ENCODE measurements at regions of chr1 and their contacts with region 1.

Region 1: GRCh38 chr1:246969621-246970020 is 37.9 kb upstream of the AHCTF1 start:
- DNase-seq: no peak
- H3K4me3 ChIP-seq: no peak overlapping the region
- H3K27ac ChIP-seq: no peak overlapping the region
- H3K4me1 ChIP-seq: no peaks in the 10 kb centered on the region
- H3K27me3 ChIP-seq: no peaks in the 10 kb centered on the region
- CTCF ChIP-seq: no peak

Region 2: DNA sequence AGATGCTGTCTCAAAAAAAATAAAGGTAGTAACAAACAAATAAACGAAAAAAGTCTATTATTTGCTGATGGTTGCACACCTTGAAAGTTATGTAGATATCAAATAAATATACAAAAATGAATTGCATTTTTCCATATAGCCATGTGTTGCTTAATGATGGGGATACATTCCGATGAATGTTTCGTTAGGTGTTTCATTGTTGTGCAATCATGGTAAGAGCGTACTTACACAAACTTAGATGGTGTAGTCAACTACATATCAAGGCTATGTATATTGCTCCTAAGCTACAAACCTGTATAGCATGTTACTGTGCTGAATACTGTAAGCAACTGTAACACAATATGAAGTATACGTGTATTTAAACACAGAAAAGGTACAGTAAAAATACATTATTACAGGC is 72.3 kb before region 1 on chr1:
- CTCF ChIA-PET with region 1: no interaction called
- dilution Hi-C with region 1: no loop called
- in situ Hi-C with region 1: no loop called
- intact Hi-C with region 1: no loop called
- DNase-seq: no peak
- H3K4me3 ChIP-seq: no peak overlapping the region
- H3K27ac ChIP-seq: no peak overlapping the region
- H3K4me1 ChIP-seq: no peaks in the 10 kb centered on the region
- H3K27me3 ChIP-seq: no peaks in the 10 kb centered on the region
- CTCF ChIP-seq: no peak

Region 3: DNA sequence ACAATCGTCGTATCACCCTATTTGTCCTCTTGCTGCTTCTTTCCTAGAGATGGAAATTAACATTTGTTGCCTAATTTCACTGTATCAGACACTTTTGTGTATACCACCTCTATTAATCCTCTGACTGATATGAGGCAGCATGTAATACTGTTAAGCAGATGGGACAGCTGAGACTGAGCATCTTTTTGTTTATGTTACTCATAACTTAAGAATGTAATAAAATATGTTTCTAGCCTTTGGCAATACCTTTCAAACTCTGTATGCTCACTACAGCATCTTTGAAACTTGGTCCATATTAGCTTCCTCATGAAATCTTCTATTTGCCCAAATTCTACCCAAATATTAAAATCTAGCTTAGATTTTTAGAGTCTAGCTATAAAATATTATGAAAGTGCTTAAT is 771.1 kb after region 1 on chr1:
- CTCF ChIA-PET with region 1: no interaction called
- dilution Hi-C with region 1: no loop called
- in situ Hi-C with region 1: no loop called
- intact Hi-C with region 1: loop called (anchors 5 kb)
- DNase-seq: no peak
- H3K4me3 ChIP-seq: no peak overlapping the region
- H3K27ac ChIP-seq: no peak overlapping the region
- H3K4me1 ChIP-seq: no peaks in the 10 kb centered on the region
- H3K27me3 ChIP-seq: no peaks in the 10 kb centered on the region
- CTCF ChIP-seq: no peak